Endothelial cell of umbilical vein (primary cell): ENCODE measurements at regions of chr6 and their contacts with region 1.

Region 1: DNA sequence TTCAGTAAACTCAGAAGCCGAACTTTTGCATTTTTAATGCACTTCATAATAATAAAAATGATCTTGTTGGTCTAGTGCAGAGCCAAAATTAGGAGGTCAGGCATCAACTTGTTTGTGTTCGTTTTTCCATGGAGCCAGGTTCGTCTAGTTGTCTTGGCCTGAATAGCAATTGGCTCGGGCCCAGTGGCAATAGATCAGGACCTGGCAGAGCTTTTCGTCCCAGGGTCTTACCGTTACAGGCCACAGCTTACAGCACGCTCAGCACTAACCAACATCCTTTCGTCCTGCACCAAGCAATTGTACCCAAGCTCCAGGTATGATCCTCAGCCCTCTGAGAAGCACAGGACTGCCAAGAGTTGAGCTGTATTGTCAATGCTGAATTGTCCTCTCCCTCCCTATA is 240.5 kb upstream of the PLN start:
- DNase-seq: no peak
- H3K4me3 ChIP-seq: no peak overlapping the region
- H3K27ac ChIP-seq: no peak overlapping the region
- H3K4me1 ChIP-seq: no peaks in the 10 kb centered on the region
- H3K27me3 ChIP-seq: no peaks in the 10 kb centered on the region
- CTCF ChIP-seq: no peak
- POLR2A ChIP-seq: no peak

Region 2: GRCh38 chr6:118292558-118292957 is 15.0 kb before region 1 on chr6:
- CTCF ChIA-PET with region 1: interaction called, 10 read pairs
- POLR2A ChIA-PET with region 1: no interaction called
- dilution Hi-C with region 1: no loop called
- intact Hi-C with region 1: no loop called
- DNase-seq: no peak
- H3K4me3 ChIP-seq: no peak overlapping the region
- H3K27ac ChIP-seq: no peak overlapping the region
- H3K4me1 ChIP-seq: peaks cover 13% of the 10 kb centered on the region
- H3K27me3 ChIP-seq: no peaks in the 10 kb centered on the region
- CTCF ChIP-seq: no peak
- POLR2A ChIP-seq: no peak